BJ (cell line): ENCODE measurements at regions of chr2 and their contacts with region 1.

Region 1: GRCh38 chr2:156489750-156490465 is 53.7 kb downstream of the GPD2 start:
- DNase-seq: no peak
- H3K4me3 ChIP-seq: no peak overlapping the region
- H3K27me3 ChIP-seq: no peaks in the 10 kb centered on the region
- CTCF ChIP-seq: no peak

Region 2: GRCh38 chr2:156511803-156512202 is 21.9 kb after region 1 on chr2:
- CTCF ChIA-PET with region 1: no interaction called
- POLR2A ChIA-PET with region 1: interaction called, 15 read pairs
- DNase-seq: no peak
- H3K4me3 ChIP-seq: no peak overlapping the region
- H3K27me3 ChIP-seq: no peaks in the 10 kb centered on the region
- CTCF ChIP-seq: no peak

Region 3: DNA sequence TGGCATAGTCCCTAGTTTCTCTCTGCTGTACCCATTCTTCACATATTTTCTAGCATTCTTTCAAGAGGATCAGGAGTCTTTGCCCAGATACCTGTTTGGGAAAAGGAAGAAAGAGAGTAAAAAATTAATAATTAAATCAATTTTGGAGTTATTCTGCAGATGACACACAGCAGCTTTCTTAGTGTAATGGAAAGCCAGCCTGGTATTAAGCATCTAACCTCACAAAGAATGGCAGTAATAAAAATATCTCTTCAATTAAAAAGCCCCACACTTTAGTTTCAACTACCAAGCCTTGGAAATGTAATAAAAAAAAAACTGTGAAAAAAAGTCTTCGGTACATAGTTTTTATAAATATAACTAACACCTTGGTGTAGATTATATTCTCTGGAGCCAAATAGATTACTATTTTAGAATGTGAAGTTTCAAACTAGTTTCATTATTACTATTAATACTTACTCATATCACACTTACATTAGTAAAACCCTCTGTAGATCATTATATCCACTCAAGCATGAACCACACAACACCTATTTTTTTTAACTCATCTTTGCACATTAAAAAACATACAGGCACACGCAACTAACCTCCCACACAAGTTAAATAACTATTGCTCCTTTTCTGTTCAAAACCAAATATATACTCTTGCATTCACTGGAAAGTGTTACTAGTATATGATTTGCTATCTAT is 37.2 kb after region 1 on chr2:
- CTCF ChIA-PET with region 1: no interaction called
- POLR2A ChIA-PET with region 1: no interaction called
- DNase-seq: no peak
- H3K4me3 ChIP-seq: no peak overlapping the region
- H3K27me3 ChIP-seq: no peaks in the 10 kb centered on the region
- CTCF ChIP-seq: no peak

Region 4: DNA sequence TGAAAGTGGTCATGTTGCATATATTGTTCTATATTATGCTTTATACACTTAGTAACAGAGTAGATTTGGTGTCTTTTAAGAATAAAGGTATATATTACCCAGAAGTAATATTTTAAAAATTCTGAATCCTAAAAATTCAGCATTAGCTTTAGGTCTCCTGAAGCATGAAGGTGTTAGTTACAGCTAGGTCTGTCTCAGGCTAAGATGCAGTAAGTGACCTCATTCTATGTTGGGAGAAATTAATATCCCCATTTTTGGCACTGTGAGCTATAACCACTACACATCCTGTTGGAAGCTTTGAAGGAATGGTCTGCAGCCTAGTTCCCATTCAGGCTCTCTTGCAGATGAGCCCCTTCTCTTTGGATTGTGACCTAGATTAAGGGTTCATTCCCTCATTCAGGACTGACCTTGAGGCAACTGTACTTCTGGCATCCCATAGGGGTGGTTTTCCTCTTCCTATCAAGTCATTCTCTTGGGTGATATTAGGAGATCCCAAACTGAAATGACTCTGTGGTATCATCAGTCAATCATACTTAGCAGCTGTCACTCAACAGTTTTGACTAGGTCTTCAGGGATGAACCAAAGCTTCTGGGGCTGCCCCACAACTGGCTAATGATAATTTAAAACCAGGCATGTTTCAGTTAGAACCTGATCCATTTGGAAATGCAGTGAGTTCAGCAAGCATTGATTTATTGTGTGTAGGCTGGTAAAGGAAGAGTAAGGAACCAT is 64.0 kb after region 1 on chr2:
- CTCF ChIA-PET with region 1: no interaction called
- POLR2A ChIA-PET with region 1: interaction called, 12 read pairs
- DNase-seq: no peak
- H3K4me3 ChIP-seq: no peak overlapping the region
- H3K27me3 ChIP-seq: no peaks in the 10 kb centered on the region
- CTCF ChIP-seq: no peak